ENCODE measurements at regions of chr3 and their contacts with region 1.

Region 1: GRCh38 chr3:49093853-49094767 is at the start of gene QRICH1:
- DNase-seq: peak; percentile 99
- H3K4me3 ChIP-seq: peak within 1 kb of the TSS; percentile 57 to 100 (median 98)
- H3K27ac ChIP-seq: peak within 1 kb of the TSS; percentile 86 to 100 (median 96)
- H3K4me1 ChIP-seq: peaks cover 0 to 48% (median 47%) of the 10 kb centered on the region in 4 donors
- H3K27me3 ChIP-seq: no peaks in the 10 kb centered on the region
- CTCF ChIP-seq: peak in 3 of 4 experiments; percentile 33 to 51 (median 37)
- EP300 ChIP-seq: no peak
- POLR2A ChIP-seq: peak; percentile 53 to 69
- total RNA-seq, gene QRICH1: 68.4 to 255 (median 135) TPM

Region 2: GRCh38 chr3:48989796-48990635 is 104.1 kb before region 1 on chr3 and contains the start of gene P4HTM:
- intact Hi-C with region 1: loop called (anchors 2 kb)
- DNase-seq: peak; percentile 97
- H3K4me3 ChIP-seq: peak within 1 kb of the TSS; percentile 62 to 95 (median 90)
- H3K27ac ChIP-seq: peak within 1 kb of the TSS; percentile 93 to 97 (median 96)
- H3K4me1 ChIP-seq: peaks cover 0 to 33% (median 26%) of the 10 kb centered on the region in 4 donors
- H3K27me3 ChIP-seq: no peaks in the 10 kb centered on the region
- CTCF ChIP-seq: peak in 3 of 4 experiments; percentile 12 to 40 (median 18)
- EP300 ChIP-seq: no peak
- POLR2A ChIP-seq: peak; percentile 64 to 71
- total RNA-seq, gene P4HTM: 30.9 to 41.3 (median 33.4) TPM

Region 3: GRCh38 chr3:49021813-49022687 is 72.1 kb before region 1 on chr3 and contains the start of gene NDUFAF3:
- intact Hi-C with region 1: loop called (anchors 5 kb)
- DNase-seq: peak; percentile 96
- H3K4me3 ChIP-seq: peak within 1 kb of the TSS; percentile 79 to 96 (median 82)
- H3K27ac ChIP-seq: peak within 1 kb of the TSS; percentile 99 to 100 (median 100)
- H3K4me1 ChIP-seq: peaks cover 0 to 55% (median 47%) of the 10 kb centered on the region in 4 donors
- H3K27me3 ChIP-seq: no peaks in the 10 kb centered on the region
- CTCF ChIP-seq: peak; percentile 96 to 98 (median 96)
- EP300 ChIP-seq: no peak
- POLR2A ChIP-seq: peak; percentile 76 to 86
- total RNA-seq, gene NDUFAF3: 75.9 to 116 (median 94.9) TPM

Region 4: GRCh38 chr3:49120438-49121131 is 26.5 kb after region 1 on chr3 and contains the start of gene USP19:
- intact Hi-C with region 1: loop called (anchors 2 kb)
- DNase-seq: peak; percentile 98
- H3K4me3 ChIP-seq: peak within 1 kb of the TSS; percentile 90 to 96 (median 94)
- H3K27ac ChIP-seq: peak within 1 kb of the TSS; percentile 93 to 98 (median 94)
- H3K4me1 ChIP-seq: peaks cover 0 to 30% (median 23%) of the 10 kb centered on the region in 4 donors
- H3K27me3 ChIP-seq: no peaks in the 10 kb centered on the region
- CTCF ChIP-seq: no peak
- EP300 ChIP-seq: peak in 1 of 4 donors; percentile 78
- POLR2A ChIP-seq: peak; percentile 79 to 86
- total RNA-seq, gene USP19: 48.2 to 98.4 (median 55.7) TPM

Region 5: DNA sequence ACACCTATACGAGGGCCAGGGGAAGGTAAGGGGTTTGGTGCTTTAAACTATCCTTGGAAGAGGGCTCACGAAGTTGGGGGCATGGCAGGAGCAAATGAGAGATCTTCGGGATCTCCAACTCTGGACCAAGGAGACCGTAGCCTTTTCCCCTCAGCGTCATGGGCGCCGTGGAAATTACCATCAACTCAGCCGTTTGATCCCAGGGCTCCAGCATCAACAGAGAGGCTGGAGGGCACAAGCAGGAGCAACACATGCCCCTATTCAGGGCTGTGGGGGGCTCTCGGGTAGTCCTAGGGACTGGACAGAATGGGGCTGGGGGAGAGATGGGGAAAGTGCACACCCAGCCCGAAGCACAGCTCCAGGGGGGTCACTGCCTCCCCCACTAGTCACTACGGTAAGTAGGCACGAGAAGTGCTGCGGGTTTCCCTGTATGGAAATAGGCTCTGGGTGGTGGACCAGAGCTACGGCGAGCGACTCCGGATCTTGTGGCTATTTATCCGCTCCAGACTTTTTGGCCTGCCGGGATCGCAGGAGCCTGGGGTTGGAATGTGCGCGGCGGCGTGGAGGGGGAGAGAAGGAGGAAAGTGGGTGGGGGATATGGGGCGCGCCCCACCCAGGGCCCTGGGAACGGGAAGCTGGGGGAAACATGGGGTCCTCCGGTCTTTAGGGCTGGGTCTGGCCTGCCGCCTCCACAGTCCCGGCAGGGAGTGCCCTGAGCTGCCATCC is 39.3 kb after region 1 on chr3:
- intact Hi-C with region 1: loop called (anchors 1 kb)
- DNase-seq: peak; percentile 95
- H3K4me3 ChIP-seq: peak overlapping the region; percentile 64 to 86 (median 69)
- H3K27ac ChIP-seq: peak overlapping the region; percentile 87 to 97 (median 92)
- H3K4me1 ChIP-seq: peaks cover 0 to 37% (median 33%) of the 10 kb centered on the region in 4 donors
- H3K27me3 ChIP-seq: no peaks in the 10 kb centered on the region
- CTCF ChIP-seq: no peak
- EP300 ChIP-seq: no peak
- POLR2A ChIP-seq: no peak

Region 6: GRCh38 chr3:49255112-49255511 is 161.0 kb after region 1 on chr3:
- intact Hi-C with region 1: no loop called
- DNase-seq: peak; percentile 54
- H3K4me3 ChIP-seq: no peak overlapping the region
- H3K27ac ChIP-seq: peak overlapping the region in 3 of 4 donors; percentile 57 to 75 (median 72)
- H3K4me1 ChIP-seq: peaks cover 0 to 40% (median 29%) of the 10 kb centered on the region in 4 donors
- H3K27me3 ChIP-seq: no peaks in the 10 kb centered on the region
- CTCF ChIP-seq: no peak
- EP300 ChIP-seq: peak in 2 of 4 donors; percentile 30 to 77
- POLR2A ChIP-seq: no peak

Region 7: DNA sequence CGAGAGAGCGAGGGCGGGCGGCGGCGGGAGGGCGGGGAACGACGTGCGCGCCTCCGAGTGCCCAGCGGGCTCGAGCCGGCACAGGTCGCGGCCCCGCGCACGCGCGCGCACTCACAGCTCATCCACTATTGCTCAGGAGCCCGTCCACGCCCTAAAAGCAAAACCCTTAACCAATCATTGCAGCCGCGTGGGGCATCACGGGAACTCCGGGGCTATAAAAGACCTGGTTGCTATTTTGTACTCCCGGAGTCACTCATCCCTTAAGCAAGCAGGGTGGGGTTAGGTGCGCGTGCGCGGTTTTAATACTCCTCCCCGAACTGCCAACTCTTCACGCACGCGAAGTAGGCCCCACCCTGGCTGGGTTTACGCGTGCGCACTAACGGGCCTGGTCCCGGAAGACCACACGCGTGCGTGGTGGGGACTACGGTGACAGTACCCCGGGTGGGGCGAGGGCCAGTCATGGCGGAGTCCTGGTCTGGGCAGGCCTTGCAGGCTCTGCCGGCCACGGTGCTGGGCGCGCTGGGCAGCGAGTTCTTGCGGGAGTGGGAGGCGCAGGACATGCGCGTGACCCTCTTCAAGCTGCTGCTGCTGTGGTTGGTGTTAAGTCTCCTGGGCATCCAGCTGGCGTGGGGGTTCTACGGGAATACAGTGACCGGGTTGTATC is 318.0 kb after region 1 on chr3 and contains the starts of genes RHOA and TCTA:
- intact Hi-C with region 1: loop called (anchors 1 kb)
- DNase-seq: peak; percentile 100
- H3K4me3 ChIP-seq: peak within 1 kb of the TSS; percentile 69 to 95 (median 74)
- H3K27ac ChIP-seq: peak within 1 kb of the TSS; percentile 95 to 99 (median 98)
- H3K4me1 ChIP-seq: peaks cover 0 to 73% (median 50%) of the 10 kb centered on the region in 4 donors
- H3K27me3 ChIP-seq: no peaks in the 10 kb centered on the region
- CTCF ChIP-seq: no peak
- EP300 ChIP-seq: peak in 1 of 4 donors; percentile 80
- POLR2A ChIP-seq: peak; percentile 93 to 96
- total RNA-seq, gene RHOA: 369 to 440 (median 416) TPM
- total RNA-seq, gene TCTA: 15.1 to 25.0 (median 16.5) TPM

Region 8: DNA sequence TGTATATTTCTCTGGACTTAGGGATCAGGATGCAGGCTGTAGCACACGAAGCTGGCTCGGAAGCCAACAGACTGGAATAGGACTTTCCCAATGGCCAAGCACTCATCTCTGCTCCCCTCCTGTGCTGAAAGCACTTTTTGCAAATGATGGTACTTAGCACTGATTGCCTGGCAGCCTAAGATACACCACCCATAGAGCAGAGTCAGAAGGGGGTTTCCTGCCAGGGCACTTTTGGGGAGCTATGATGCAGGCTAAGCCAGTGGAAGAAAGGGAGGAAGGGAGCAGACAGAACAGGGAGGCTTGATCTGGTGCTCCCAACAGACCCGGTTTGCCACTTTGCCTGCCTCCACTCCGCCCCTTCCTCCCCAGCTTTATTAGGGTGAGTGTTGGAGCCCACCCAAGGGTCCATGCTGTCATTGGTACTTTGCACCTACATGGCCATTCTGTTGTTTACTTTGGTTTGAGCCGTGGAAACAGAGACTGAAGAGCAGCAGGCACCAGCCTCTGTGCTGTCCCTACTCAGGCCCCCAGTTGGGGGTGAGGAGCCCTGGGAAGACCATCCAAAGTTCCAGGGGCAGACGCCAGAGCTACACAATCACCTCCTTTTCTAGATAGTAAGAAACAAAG is 476.0 kb after region 1 on chr3:
- intact Hi-C with region 1: no loop called
- DNase-seq: no peak
- H3K4me3 ChIP-seq: no peak overlapping the region
- H3K27ac ChIP-seq: no peak overlapping the region
- H3K4me1 ChIP-seq: no peaks in the 10 kb centered on the region
- H3K27me3 ChIP-seq: no peaks in the 10 kb centered on the region
- CTCF ChIP-seq: no peak
- EP300 ChIP-seq: no peak
- POLR2A ChIP-seq: no peak

Measured in sigmoid colon (tissue), 7 donors.